ENCODE measurements at regions of chr3 and their contacts with region 1.

Region 1: DNA sequence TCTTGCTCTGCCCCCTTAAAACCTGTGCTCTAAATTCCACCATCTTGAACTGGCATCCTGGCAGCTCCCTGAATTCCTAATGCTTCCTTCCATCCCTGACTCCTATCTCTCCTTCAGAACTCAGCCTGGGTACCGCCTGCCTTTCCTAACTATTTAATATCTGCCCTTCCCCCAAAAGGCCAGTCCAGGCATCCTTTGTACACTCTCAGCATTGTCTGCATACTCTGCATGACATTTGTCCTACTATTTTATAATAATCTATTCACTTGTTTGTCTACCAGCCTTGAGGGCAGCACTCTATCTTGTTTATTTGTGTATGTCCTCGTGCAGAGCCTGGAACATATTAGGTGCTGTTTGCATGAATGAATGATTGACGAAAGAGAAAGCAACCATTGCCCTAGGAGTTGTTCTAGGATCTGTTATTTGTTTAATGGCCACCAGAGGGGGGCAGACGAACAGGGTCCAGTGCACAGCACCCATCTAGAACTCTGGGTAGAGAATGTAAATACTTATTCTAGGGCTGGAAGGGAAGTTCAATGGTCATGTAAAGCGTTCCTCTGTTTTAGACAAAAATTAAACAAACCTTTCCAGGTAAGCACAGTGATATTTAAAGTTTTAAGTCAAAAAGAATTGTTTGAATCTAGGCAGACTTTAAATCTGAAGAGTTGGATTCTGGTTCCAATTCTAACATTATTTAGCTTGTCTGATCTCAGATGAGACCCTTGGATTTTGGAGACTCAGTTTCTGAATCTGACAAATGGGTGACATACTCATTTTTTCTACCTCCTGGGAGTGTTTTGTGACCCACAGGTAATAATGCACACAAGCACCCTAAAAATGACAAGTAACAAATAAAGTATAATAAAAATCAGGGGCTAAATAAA is 125.8 kb upstream of the GALNT15 start:
- DNase-seq: peak; percentile 70 to 75 (median 74)
- ATAC-seq: peak; percentile 99
- H3K4me3 ChIP-seq: no peak overlapping the region
- H3K27ac ChIP-seq: no peak overlapping the region
- H3K4me1 ChIP-seq: no peaks in the 10 kb centered on the region
- H3K27me3 ChIP-seq: peaks cover 0 to 11% of the 10 kb centered on the region in 2 experiments; a peak in 2 of 5 replicates
- CTCF ChIP-seq: peak; percentile 82 to 89 (median 84)
- EP300 ChIP-seq: no peak
- POLR2A ChIP-seq: no peak
- RAD21 ChIP-seq: peak; percentile 94 to 95

Region 2: DNA sequence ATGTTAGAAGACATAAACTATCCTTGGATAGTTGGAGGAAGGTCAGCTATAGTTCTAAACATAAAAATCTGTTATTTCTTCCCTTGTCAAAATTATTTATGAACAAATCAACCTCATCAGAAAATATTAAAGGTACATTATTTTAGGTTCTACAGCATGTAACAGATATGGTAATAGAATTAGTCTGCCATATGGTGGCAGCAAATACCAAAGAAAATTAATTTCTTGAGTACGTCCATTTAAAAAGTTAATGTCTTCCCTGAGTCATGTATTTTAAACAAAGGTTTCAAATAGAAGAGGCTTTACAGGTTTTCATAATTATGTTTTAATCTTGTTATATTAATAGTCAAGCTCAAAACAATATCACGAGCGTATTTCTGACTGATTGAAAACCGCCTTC is 233.0 kb before region 1 on chr3:
- CTCF ChIA-PET with region 1: no interaction called
- POLR2A ChIA-PET with region 1: no interaction called
- in situ Hi-C with region 1: no loop called
- intact Hi-C with region 1: loop called (anchors 1 kb)
- DNase-seq: peak in 1 of 4 experiments; percentile 34
- ATAC-seq: peak; percentile 43; the same call in 1 of the 3 replicates
- H3K4me3 ChIP-seq: no peak overlapping the region
- H3K27ac ChIP-seq: no peak overlapping the region
- H3K4me1 ChIP-seq: no peaks in the 10 kb centered on the region
- H3K27me3 ChIP-seq: no peaks in the 10 kb centered on the region
- CTCF ChIP-seq: peak in 1 of 3 experiments; percentile 59; a peak in 2 of 6 replicates
- EP300 ChIP-seq: no peak
- POLR2A ChIP-seq: no peak
- RAD21 ChIP-seq: peak; percentile 64 to 82

Region 3: GRCh38 chr3:15875016-15875689 is 173.5 kb before region 1 on chr3:
- CTCF ChIA-PET with region 1: no interaction called
- POLR2A ChIA-PET with region 1: no interaction called
- in situ Hi-C with region 1: no loop called
- intact Hi-C with region 1: no loop called
- DNase-seq: no peak
- ATAC-seq: no peak; the same call in 2 of the 3 replicates
- H3K4me3 ChIP-seq: no peak overlapping the region
- H3K27ac ChIP-seq: no peak overlapping the region
- H3K4me1 ChIP-seq: peaks cover 6% of the 10 kb centered on the region in 2 experiments; a peak in 3 of 5 replicates
- H3K27me3 ChIP-seq: no peaks in the 10 kb centered on the region
- CTCF ChIP-seq: no peak
- EP300 ChIP-seq: no peak
- POLR2A ChIP-seq: no peak
- RAD21 ChIP-seq: no peak

Region 4: DNA sequence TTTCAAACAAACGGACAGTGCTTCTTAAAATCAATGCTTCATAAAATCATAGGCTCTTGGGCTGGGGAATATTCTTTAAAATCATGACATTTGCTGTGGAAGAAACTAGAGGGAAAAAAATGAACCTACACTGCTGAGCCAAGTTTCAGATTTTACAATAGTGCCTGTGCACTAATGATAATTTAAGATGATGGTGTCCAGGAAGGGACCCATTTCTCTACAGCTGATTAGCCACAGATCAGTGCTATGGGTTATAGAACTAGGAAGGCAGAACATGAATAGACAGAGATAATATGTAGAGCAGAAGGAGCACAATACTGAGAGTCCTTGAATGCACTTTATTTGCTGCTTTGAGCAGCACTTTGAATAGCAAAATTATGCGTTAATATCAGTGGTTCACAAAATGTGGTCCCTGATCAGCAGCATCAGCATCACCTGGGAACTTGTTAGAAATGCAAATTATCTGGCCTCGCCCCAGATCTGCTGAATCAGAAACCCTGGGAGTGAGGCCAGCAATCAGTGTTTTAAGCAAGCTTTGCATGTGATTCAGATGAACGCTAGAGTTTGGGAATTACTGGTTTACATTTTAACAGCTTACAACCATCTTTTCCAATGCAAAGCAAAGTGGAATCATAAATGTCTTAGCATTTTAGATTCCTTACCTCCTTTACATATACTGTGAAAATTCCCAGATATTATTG is 115.1 kb before region 1 on chr3:
- CTCF ChIA-PET with region 1: no interaction called
- POLR2A ChIA-PET with region 1: no interaction called
- in situ Hi-C with region 1: no loop called
- intact Hi-C with region 1: no loop called
- DNase-seq: no peak
- ATAC-seq: no peak
- H3K4me3 ChIP-seq: no peak overlapping the region
- H3K27ac ChIP-seq: no peak overlapping the region
- H3K4me1 ChIP-seq: no peaks in the 10 kb centered on the region
- H3K27me3 ChIP-seq: peaks cover 12 to 24% of the 10 kb centered on the region in 2 experiments; a peak in 4 of 5 replicates
- CTCF ChIP-seq: no peak
- EP300 ChIP-seq: no peak
- POLR2A ChIP-seq: no peak
- RAD21 ChIP-seq: no peak

Region 5: DNA sequence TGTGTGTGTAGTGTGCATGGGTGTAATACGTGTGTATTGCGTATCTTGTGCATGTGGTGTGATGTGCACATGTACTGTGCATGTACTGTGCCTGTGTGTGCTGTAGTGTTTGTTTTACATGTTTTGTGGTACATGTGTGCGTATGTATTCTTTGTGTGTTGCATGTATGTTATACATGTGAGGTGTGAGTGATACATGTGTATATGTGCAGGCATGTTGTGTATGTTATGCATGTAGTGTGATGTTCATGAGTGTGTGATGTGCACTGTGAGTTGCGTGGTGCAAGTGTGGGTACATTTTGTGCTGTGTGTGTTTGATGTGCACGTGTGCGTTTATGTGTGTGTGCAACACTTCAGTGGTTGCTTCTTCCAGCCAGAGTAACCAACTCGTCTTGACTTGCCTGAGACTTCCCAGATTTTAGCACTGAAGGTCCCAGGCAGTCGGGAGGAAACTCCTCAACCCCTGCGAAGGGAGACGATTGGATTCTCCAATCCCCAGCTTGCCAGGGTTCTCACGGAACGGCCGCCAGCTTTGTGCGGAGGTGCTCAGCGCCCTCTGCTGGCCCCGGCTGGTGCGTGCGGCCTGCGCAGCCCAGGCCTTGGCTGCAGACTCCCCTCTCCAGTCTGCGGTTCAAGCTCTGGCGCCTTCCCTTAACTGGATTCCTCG is 129.4 kb after region 1 on chr3:
- CTCF ChIA-PET with region 1: interaction called, 28 read pairs
- POLR2A ChIA-PET with region 1: no interaction called
- in situ Hi-C with region 1: no loop called
- intact Hi-C with region 1: loop called (anchors 1 kb)
- DNase-seq: peak; percentile 74 to 90 (median 82)
- ATAC-seq: peak; percentile 97
- H3K4me3 ChIP-seq: no peak overlapping the region
- H3K27ac ChIP-seq: no peak overlapping the region
- H3K4me1 ChIP-seq: peaks cover 0 to 5% of the 10 kb centered on the region in 2 experiments; a peak in 1 of 5 replicates
- H3K27me3 ChIP-seq: peaks cover 17 to 55% of the 10 kb centered on the region in 2 experiments
- CTCF ChIP-seq: peak; percentile 94 to 97 (median 96)
- EP300 ChIP-seq: no peak
- POLR2A ChIP-seq: no peak
- RAD21 ChIP-seq: peak; percentile 94

Measured in K562 (cell line).